ENCODE measurements at regions of chr7 and their contacts with region 1.

Region 1: DNA sequence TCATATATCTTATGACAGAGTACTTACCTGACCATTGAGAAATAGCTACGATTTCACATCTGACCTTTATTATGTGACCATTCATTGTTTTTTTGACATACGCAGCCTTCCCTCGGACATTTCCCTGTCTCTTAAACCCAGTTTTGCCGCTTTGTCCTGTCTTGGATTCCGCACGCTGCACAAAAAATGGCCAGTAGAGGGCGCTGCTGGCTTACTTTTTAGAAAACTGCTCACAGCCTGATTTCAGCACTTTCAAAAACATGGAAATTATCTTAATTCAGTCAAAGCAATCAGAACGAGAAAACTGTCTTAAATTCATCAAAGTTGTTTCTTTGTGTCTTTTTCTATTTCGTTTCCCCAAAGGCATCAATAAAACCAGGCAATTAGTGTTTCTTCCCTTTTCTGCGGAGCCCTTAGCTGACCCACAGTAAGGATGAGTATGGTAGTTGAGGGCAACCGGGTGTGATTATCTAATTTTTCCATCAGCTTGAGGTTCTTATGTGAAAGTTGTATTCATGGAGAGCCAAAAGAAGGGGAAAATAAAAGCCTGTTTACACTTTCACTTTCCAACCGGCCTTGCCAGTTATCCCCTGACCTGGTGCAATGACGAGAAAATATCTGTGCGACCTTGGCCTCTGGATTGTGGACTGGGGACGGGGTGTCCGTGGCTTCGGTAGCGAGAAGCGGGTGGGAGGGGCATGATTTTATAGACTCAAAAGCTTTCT is 144.4 kb downstream of the DYNC1I1 start:
- DNase-seq: peak; percentile 49
- H3K4me3 Mint-ChIP-seq: no peak overlapping the region
- H3K27ac Mint-ChIP-seq: no peak overlapping the region
- H3K4me1 Mint-ChIP-seq: peaks cover 10% of the 10 kb centered on the region
- H3K27me3 Mint-ChIP-seq: peaks cover 12% of the 10 kb centered on the region

Region 2: GRCh38 chr7:96075510-96076349 is 159.0 kb after region 1 on chr7:
- intact Hi-C with region 1: loop called (anchors 10 kb)
- DNase-seq: peak; percentile 20
- H3K4me3 Mint-ChIP-seq: peak overlapping the region; percentile 77
- H3K27ac Mint-ChIP-seq: no peak overlapping the region
- H3K4me1 Mint-ChIP-seq: peaks cover 4% of the 10 kb centered on the region
- H3K27me3 Mint-ChIP-seq: peaks cover 46% of the 10 kb centered on the region

Region 3: GRCh38 chr7:96495751-96496216 is 579.0 kb after region 1 on chr7:
- intact Hi-C with region 1: loop called (anchors 5 kb)
- DNase-seq: peak; percentile 20
- H3K4me3 Mint-ChIP-seq: peak overlapping the region; percentile 62
- H3K27ac Mint-ChIP-seq: peak overlapping the region; percentile 92
- H3K4me1 Mint-ChIP-seq: peaks cover 27% of the 10 kb centered on the region
- H3K27me3 Mint-ChIP-seq: peaks cover 9% of the 10 kb centered on the region

Region 4: GRCh38 chr7:97835296-97836138 is 1918.8 kb after region 1 on chr7:
- intact Hi-C with region 1: loop called (anchors 10 kb)
- DNase-seq: peak; percentile 25
- H3K4me3 Mint-ChIP-seq: no peak overlapping the region
- H3K27ac Mint-ChIP-seq: no peak overlapping the region
- H3K4me1 Mint-ChIP-seq: no peaks in the 10 kb centered on the region
- H3K27me3 Mint-ChIP-seq: peaks cover 26% of the 10 kb centered on the region